ENCODE measurements at regions of chrX and their contacts with region 1.

Region 1: GRCh38 chrX:10086676-10087075 is 70.1 kb upstream of the CLCN4 start:
- DNase-seq: no peak
- ATAC-seq: no peak
- H3K4me3 ChIP-seq: no peak overlapping the region
- H3K27ac ChIP-seq: no peak overlapping the region
- H3K4me1 ChIP-seq: peaks cover 21% of the 10 kb centered on the region
- H3K27me3 ChIP-seq: no peaks in the 10 kb centered on the region
- CTCF ChIP-seq: no peak
- EP300 ChIP-seq: no peak
- POLR2A ChIP-seq: no peak
- RAD21 ChIP-seq: no peak

Region 2: GRCh38 chrX:10001496-10001895 is 85.2 kb before region 1 on chrX:
- CTCF ChIA-PET with region 1: interaction called, 32 read pairs
- POLR2A ChIA-PET with region 1: interaction called, 8 read pairs
- RAD21 ChIA-PET with region 1: interaction called, 74 read pairs
- SMC1A ChIA-PET with region 1: interaction called, 42 read pairs
- in situ Hi-C with region 1: no loop called
- intact Hi-C with region 1: loop called (anchors 1 kb)
- DNase-seq: no peak
- ATAC-seq: no peak
- H3K4me3 ChIP-seq: no peak overlapping the region
- H3K27ac ChIP-seq: no peak overlapping the region
- H3K4me1 ChIP-seq: peaks cover 9% of the 10 kb centered on the region
- H3K27me3 ChIP-seq: no peaks in the 10 kb centered on the region
- CTCF ChIP-seq: no peak
- EP300 ChIP-seq: no peak
- POLR2A ChIP-seq: no peak
- RAD21 ChIP-seq: no peak

Region 3: GRCh38 chrX:10014462-10015356 is 72.0 kb before region 1 on chrX:
- CTCF ChIA-PET with region 1: interaction called, 16 read pairs
- POLR2A ChIA-PET with region 1: interaction called, 7 read pairs
- RAD21 ChIA-PET with region 1: interaction called, 17 read pairs
- SMC1A ChIA-PET with region 1: interaction called, 37 read pairs
- in situ Hi-C with region 1: no loop called
- intact Hi-C with region 1: loop called (anchors 2 kb)
- DNase-seq: no peak
- ATAC-seq: peak; percentile 66
- H3K4me3 ChIP-seq: peak overlapping the region; percentile 58; the same call in 1 of the 2 replicates
- H3K27ac ChIP-seq: peak overlapping the region; percentile 33; the same call in 1 of the 2 replicates
- H3K4me1 ChIP-seq: peaks cover 9% of the 10 kb centered on the region
- H3K27me3 ChIP-seq: no peaks in the 10 kb centered on the region
- CTCF ChIP-seq: no peak
- EP300 ChIP-seq: no peak
- POLR2A ChIP-seq: peak; percentile 48; the same call in 1 of the 2 replicates
- RAD21 ChIP-seq: no peak

Region 4: GRCh38 chrX:10062352-10062751 is 24.3 kb before region 1 on chrX:
- CTCF ChIA-PET with region 1: interaction called, 4 read pairs
- POLR2A ChIA-PET with region 1: interaction called, 12 read pairs
- RAD21 ChIA-PET with region 1: interaction called, 13 read pairs
- SMC1A ChIA-PET with region 1: interaction called, 21 read pairs
- in situ Hi-C with region 1: no loop called
- intact Hi-C with region 1: loop called (anchors 1 kb)
- DNase-seq: peak; percentile 45
- ATAC-seq: peak; percentile 89
- H3K4me3 ChIP-seq: no peak overlapping the region
- H3K27ac ChIP-seq: no peak overlapping the region
- H3K4me1 ChIP-seq: peaks cover 5% of the 10 kb centered on the region; the same call in 1 of the 2 replicates
- H3K27me3 ChIP-seq: no peaks in the 10 kb centered on the region
- CTCF ChIP-seq: no peak
- EP300 ChIP-seq: peak in 1 of 2 experiments; percentile 53; a peak in 2 of 4 replicates
- POLR2A ChIP-seq: no peak
- RAD21 ChIP-seq: no peak

Region 5: GRCh38 chrX:10098270-10098713 is 11.6 kb after region 1 on chrX:
- CTCF ChIA-PET with region 1: interaction called, 68 read pairs
- POLR2A ChIA-PET with region 1: interaction called, 68 read pairs
- RAD21 ChIA-PET with region 1: interaction called, 90 read pairs
- SMC1A ChIA-PET with region 1: interaction called, 110 read pairs
- in situ Hi-C with region 1: no loop called
- intact Hi-C with region 1: loop called (anchors 1 kb)
- DNase-seq: peak; percentile 51
- ATAC-seq: peak; percentile 87
- H3K4me3 ChIP-seq: peak overlapping the region; percentile 50
- H3K27ac ChIP-seq: peak overlapping the region; percentile 77
- H3K4me1 ChIP-seq: peaks cover 11% of the 10 kb centered on the region
- H3K27me3 ChIP-seq: no peaks in the 10 kb centered on the region; a peak in 1 of 4 replicates
- CTCF ChIP-seq: no peak
- EP300 ChIP-seq: peak in 1 of 2 experiments; percentile 63; a peak in 1 of 4 replicates
- POLR2A ChIP-seq: no peak
- RAD21 ChIP-seq: 0 out of 2 replicates have a peak, but pooled peaks have one; percentile 19

Measured in GM12878 (cell line).